ENCODE measurements at regions of chr17 and their contacts with region 1.

Region 1: DNA sequence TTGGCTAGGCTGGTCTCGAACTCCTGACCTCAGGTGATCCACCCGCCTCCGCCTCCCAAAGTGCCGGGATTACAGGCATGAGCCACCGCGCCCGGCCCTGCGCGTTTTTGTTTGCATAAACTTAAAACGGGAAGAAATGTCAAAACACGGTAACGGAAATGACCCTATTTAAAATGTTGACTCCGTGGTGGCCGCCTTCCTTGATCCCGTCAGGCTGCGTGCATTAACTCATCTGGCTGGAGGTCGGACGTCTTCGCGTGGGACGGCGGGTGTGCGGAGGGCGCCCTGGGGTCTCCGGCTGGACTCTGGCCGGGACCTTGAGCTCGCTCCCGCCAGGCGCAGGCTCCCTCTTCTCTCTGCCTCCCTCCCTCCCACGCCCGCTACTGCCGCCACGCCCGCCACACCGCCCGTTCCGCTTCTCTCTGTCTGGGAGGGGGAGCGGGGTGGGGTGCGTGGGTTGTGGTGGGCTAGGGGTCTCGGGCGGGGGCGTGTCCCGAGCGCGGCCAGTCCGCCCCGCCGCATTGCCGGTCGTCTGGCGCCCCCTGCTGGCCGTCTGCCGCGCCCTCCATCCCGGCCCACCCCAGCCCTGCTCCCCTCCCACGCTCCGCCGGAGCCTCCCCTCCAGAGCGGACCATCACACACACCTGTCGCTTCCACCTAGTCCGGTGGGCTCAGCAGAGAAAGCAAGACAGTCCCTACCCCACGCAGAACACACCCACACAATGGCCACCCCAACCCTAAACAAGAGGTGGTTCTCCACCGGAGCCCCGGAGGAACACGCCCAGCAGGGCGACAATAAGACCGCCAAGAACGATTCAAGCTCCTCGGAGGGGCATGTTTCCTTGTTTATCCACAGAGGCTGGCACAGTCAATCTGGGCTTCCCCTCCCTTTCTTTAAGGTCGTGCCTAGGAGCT is 1.2 kb upstream of the CCDC42 start:
- DNase-seq: peak; percentile 88
- ATAC-seq: peak; percentile 86
- H3K4me3 ChIP-seq: peak overlapping the region; percentile 59 to 75 (median 72)
- H3K4me3 Mint-ChIP-seq: peak overlapping the region; percentile 93
- H3K27ac ChIP-seq: peak overlapping the region; percentile 50 to 68
- H3K27ac Mint-ChIP-seq: peak overlapping the region; percentile 93
- H3K4me1 ChIP-seq: peaks cover 7 to 23% of the 10 kb centered on the region in 2 donors
- H3K4me1 Mint-ChIP-seq: peaks cover 20% of the 10 kb centered on the region
- H3K27me3 ChIP-seq: no peaks in the 10 kb centered on the region
- H3K27me3 Mint-ChIP-seq: peaks cover 9% of the 10 kb centered on the region
- CTCF ChIP-seq: peak; percentile 98

Region 2: GRCh38 chr17:7972131-7972785 is 773.6 kb before region 1 on chr17:
- CTCF ChIA-PET with region 1: no interaction called
- POLR2A ChIA-PET with region 1: no interaction called
- intact Hi-C with region 1: no loop called
- DNase-seq: no peak
- ATAC-seq: no peak
- H3K4me3 ChIP-seq: no peak overlapping the region
- H3K4me3 Mint-ChIP-seq: no peak overlapping the region
- H3K27ac ChIP-seq: no peak overlapping the region
- H3K27ac Mint-ChIP-seq: no peak overlapping the region
- H3K4me1 ChIP-seq: no peaks in the 10 kb centered on the region
- H3K4me1 Mint-ChIP-seq: no peaks in the 10 kb centered on the region
- H3K27me3 ChIP-seq: peaks cover 0 to 11% (median 0%) of the 10 kb centered on the region in 4 experiments
- H3K27me3 Mint-ChIP-seq: peaks cover 7% of the 10 kb centered on the region
- CTCF ChIP-seq: peak; percentile 21

Region 3: DNA sequence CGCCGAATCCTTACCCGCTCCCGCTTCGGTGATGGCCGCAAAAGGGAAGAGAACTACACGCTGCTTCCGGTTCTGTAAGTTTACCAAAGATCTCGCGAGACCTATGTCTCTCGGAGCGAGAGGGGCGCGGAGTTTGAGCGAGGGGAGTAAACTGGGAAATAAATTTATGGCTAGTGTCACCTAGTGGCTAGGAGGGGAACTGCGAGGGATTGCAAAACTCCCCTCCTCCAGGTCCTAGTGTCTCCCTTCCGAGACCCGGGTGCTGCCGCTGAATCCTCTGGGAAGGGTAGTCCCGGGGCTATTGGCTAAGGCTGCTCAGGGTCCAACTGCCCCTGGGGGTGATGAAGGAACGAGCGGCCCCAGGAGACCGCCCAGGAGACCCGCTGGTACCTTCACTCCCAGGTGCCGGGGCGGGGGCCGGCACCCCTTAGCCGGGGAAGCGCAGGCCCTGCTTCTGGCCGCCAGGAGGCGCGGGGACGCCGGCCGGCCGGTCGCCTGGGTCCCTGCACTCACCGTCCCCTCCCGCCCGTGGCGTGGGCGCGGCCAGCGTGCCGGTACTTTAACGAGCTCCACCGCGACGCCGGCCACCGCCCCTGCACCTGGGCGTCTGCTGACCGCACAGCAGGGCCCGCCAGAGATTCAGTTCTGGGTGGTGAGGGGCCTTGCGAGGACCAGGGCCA is 362.6 kb before region 1 on chr17 and contains the start of gene RPL26:
- CTCF ChIA-PET with region 1: interaction called, 20 read pairs
- POLR2A ChIA-PET with region 1: interaction called, 5 read pairs
- intact Hi-C with region 1: loop called (anchors 1 kb)
- DNase-seq: peak; percentile 98
- ATAC-seq: peak; percentile 89
- H3K4me3 ChIP-seq: peak within 1 kb of the TSS; percentile 73 to 95 (median 84)
- H3K4me3 Mint-ChIP-seq: peak within 1 kb of the TSS; percentile 89
- H3K27ac ChIP-seq: peak within 1 kb of the TSS; percentile 72 to 82
- H3K27ac Mint-ChIP-seq: peak within 1 kb of the TSS; percentile 87
- H3K4me1 ChIP-seq: peaks cover 25 to 36% of the 10 kb centered on the region in 2 donors
- H3K4me1 Mint-ChIP-seq: peaks cover 50% of the 10 kb centered on the region
- H3K27me3 ChIP-seq: no peaks in the 10 kb centered on the region
- H3K27me3 Mint-ChIP-seq: no peaks in the 10 kb centered on the region
- CTCF ChIP-seq: peak; percentile 100
- total RNA-seq, gene RPL26: 2,601 and 2,684 TPM in 2 replicates

Region 4: GRCh38 chr17:8409966-8410864 is 335.6 kb before region 1 on chr17:
- CTCF ChIA-PET with region 1: interaction called, 81 read pairs
- POLR2A ChIA-PET with region 1: no interaction called
- intact Hi-C with region 1: loop called (anchors 1 kb)
- DNase-seq: peak; percentile 85
- ATAC-seq: peak; percentile 76
- H3K4me3 ChIP-seq: no peak overlapping the region
- H3K4me3 Mint-ChIP-seq: no peak overlapping the region
- H3K27ac ChIP-seq: no peak overlapping the region
- H3K27ac Mint-ChIP-seq: peak overlapping the region; percentile 50
- H3K4me1 ChIP-seq: peaks cover 0 to 5% of the 10 kb centered on the region in 2 donors
- H3K4me1 Mint-ChIP-seq: peaks cover 4% of the 10 kb centered on the region
- H3K27me3 ChIP-seq: peaks cover 0 to 19% (median 4%) of the 10 kb centered on the region in 4 experiments
- H3K27me3 Mint-ChIP-seq: peaks cover 21% of the 10 kb centered on the region
- CTCF ChIP-seq: peak; percentile 95

Region 5: GRCh38 chr17:8435245-8436168 is 310.3 kb before region 1 on chr17 and contains the start of gene NDEL1:
- CTCF ChIA-PET with region 1: interaction called, 10 read pairs
- POLR2A ChIA-PET with region 1: no interaction called
- intact Hi-C with region 1: no loop called
- DNase-seq: peak; percentile 98
- ATAC-seq: peak; percentile 94
- H3K4me3 ChIP-seq: peak within 1 kb of the TSS; percentile 77 to 91 (median 88)
- H3K4me3 Mint-ChIP-seq: peak within 1 kb of the TSS; percentile 98
- H3K27ac ChIP-seq: peak within 1 kb of the TSS; percentile 93 to 95
- H3K27ac Mint-ChIP-seq: peak within 1 kb of the TSS; percentile 98
- H3K4me1 ChIP-seq: peaks cover 20 to 23% of the 10 kb centered on the region in 2 donors
- H3K4me1 Mint-ChIP-seq: peaks cover 36% of the 10 kb centered on the region
- H3K27me3 ChIP-seq: no peaks in the 10 kb centered on the region
- H3K27me3 Mint-ChIP-seq: no peaks in the 10 kb centered on the region
- CTCF ChIP-seq: no peak
- total RNA-seq, gene NDEL1: 108 and 122 TPM in 2 replicates

Region 6: DNA sequence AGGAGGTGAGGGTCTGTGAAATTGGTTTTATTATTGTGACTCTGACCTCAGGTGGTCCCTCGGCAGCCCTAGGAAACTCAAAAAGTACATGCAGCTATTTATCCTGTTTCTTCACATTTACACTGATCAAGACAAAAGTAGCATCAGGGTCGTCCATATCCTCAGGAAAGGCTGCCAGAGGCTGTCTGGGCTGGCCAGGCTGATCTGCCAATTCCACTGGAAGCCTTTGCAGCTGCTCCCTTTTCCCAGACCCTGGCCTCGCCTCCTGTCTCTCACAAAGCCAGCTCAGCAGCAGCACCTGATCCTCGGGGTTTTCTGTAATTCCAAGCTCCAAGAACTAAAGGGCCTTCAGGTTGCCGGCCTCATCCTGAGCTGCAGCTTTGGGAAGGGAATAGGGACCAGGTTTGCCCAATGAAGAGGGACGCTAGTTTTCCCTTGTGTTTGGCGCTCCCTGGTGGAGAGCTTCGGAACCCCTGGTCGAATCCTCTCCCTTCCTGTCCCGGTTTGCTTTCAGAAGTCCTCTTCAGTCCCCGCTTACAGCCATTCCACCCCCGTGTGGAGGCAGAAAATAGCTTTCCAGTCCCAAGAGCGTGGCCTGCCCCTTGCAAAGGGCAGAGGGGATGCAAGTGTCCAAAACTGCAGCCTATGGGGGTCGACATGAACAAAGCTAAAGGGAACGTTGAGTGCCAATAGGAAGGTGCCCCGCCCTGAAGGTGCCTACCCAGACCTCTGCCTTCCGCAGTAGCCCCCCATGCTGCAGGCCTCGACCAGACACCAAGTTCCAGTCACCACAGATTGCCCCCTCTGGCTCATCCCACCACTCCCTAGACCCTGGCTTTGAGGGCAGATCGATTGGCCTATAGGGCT is 39.9 kb after region 1 on chr17:
- CTCF ChIA-PET with region 1: interaction called, 14 read pairs
- POLR2A ChIA-PET with region 1: no interaction called
- intact Hi-C with region 1: no loop called
- DNase-seq: peak; percentile 68
- ATAC-seq: no peak
- H3K4me3 ChIP-seq: no peak overlapping the region
- H3K4me3 Mint-ChIP-seq: no peak overlapping the region
- H3K27ac ChIP-seq: no peak overlapping the region
- H3K27ac Mint-ChIP-seq: no peak overlapping the region
- H3K4me1 ChIP-seq: peaks cover 3 to 6% of the 10 kb centered on the region in 2 donors
- H3K4me1 Mint-ChIP-seq: peaks cover 2% of the 10 kb centered on the region
- H3K27me3 ChIP-seq: peaks cover 0 to 6% (median 0%) of the 10 kb centered on the region in 4 experiments
- H3K27me3 Mint-ChIP-seq: peaks cover 6% of the 10 kb centered on the region
- CTCF ChIP-seq: peak; percentile 94

Region 7: GRCh38 chr17:8799570-8800207 is 53.8 kb after region 1 on chr17:
- CTCF ChIA-PET with region 1: no interaction called
- POLR2A ChIA-PET with region 1: no interaction called
- intact Hi-C with region 1: no loop called
- DNase-seq: no peak
- ATAC-seq: no peak
- H3K4me3 ChIP-seq: no peak overlapping the region
- H3K4me3 Mint-ChIP-seq: no peak overlapping the region
- H3K27ac ChIP-seq: no peak overlapping the region
- H3K27ac Mint-ChIP-seq: no peak overlapping the region
- H3K4me1 ChIP-seq: peaks cover 0 to 7% of the 10 kb centered on the region in 2 donors
- H3K4me1 Mint-ChIP-seq: peaks cover 14% of the 10 kb centered on the region
- H3K27me3 ChIP-seq: no peaks in the 10 kb centered on the region
- H3K27me3 Mint-ChIP-seq: no peaks in the 10 kb centered on the region
- CTCF ChIP-seq: no peak

Region 8: GRCh38 chr17:8900626-8901585 is 155.1 kb after region 1 on chr17:
- CTCF ChIA-PET with region 1: interaction called, 18 read pairs
- POLR2A ChIA-PET with region 1: no interaction called
- intact Hi-C with region 1: loop called (anchors 2 kb)
- DNase-seq: peak; percentile 60
- ATAC-seq: peak; percentile 22
- H3K4me3 ChIP-seq: peak overlapping the region in 1 of 5 experiments; percentile 6
- H3K4me3 Mint-ChIP-seq: peak overlapping the region; percentile 63
- H3K27ac ChIP-seq: peak overlapping the region; percentile 56 to 81
- H3K27ac Mint-ChIP-seq: peak overlapping the region; percentile 86
- H3K4me1 ChIP-seq: peaks cover 48 to 54% of the 10 kb centered on the region in 2 donors
- H3K4me1 Mint-ChIP-seq: peaks cover 60% of the 10 kb centered on the region
- H3K27me3 ChIP-seq: no peaks in the 10 kb centered on the region
- H3K27me3 Mint-ChIP-seq: no peaks in the 10 kb centered on the region
- CTCF ChIP-seq: no peak

Region 9: GRCh38 chr17:9183306-9183705 is 437.5 kb after region 1 on chr17:
- CTCF ChIA-PET with region 1: no interaction called
- POLR2A ChIA-PET with region 1: no interaction called
- intact Hi-C with region 1: no loop called
- DNase-seq: no peak
- ATAC-seq: no peak
- H3K4me3 ChIP-seq: no peak overlapping the region
- H3K4me3 Mint-ChIP-seq: no peak overlapping the region
- H3K27ac ChIP-seq: no peak overlapping the region
- H3K27ac Mint-ChIP-seq: no peak overlapping the region
- H3K4me1 ChIP-seq: no peaks in the 10 kb centered on the region
- H3K4me1 Mint-ChIP-seq: no peaks in the 10 kb centered on the region
- H3K27me3 ChIP-seq: peaks cover 0 to 10% (median 0%) of the 10 kb centered on the region in 4 experiments
- H3K27me3 Mint-ChIP-seq: peaks cover 18% of the 10 kb centered on the region
- CTCF ChIP-seq: no peak

Measured in B cell (primary cell).